Testis (tissue), 5 donors: ENCODE measurements at regions of chr10 and their contacts with region 1.

Region 1: DNA sequence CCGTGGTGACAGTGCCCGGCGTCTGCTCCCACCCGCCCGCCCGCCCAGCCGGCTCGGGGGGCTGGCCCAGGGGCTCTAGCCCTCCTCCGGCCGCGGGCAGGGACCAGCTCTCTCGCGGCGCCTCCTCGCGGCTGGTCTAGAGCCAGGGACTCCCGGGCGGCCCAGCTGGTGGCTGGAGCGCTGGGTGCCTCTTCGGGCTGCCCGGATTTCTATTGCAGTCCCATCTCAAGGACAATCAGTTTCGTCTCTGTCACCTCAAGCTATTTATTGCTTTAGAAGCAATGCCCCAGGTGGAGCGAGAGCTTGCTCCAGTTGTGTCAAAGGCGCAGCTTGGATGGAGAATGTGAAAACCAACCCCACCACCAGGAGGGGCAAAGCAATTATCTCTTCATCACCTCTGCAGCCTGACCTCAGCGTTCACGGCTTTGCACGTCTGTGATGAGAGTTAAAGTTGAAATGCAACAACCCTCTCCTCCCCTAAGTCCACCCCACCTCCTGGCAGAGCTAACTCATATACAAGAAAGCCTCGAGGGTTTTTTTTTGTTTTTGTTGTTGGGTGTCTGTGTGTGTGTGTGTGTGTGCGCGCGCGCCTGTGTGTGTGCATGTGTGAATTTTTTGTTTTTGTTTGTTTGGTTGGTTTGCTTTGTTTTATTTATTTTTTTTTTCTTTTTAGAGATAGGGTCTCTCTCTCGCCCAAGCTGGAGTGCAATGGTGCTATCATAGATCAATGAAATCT is at the start of gene ITGA8:
- DNase-seq: peak; percentile 45
- H3K4me3 ChIP-seq: peak within 1 kb of the TSS; percentile 5 to 32
- H3K27ac ChIP-seq: no peak within 1 kb of the TSS
- H3K4me1 ChIP-seq: peaks cover 8% of the 10 kb centered on the region
- H3K27me3 ChIP-seq: no peaks in the 10 kb centered on the region
- CTCF ChIP-seq: peak in 2 of 3 experiments; percentile 10 to 39
- POLR2A ChIP-seq: no peak
- total RNA-seq, gene ITGA8: 0.68 to 0.79 TPM

Region 2: GRCh38 chr10:15433850-15434537 is 286.1 kb before region 1 on chr10:
- intact Hi-C with region 1: loop called (anchors 5 kb)
- DNase-seq: peak; percentile 70
- H3K4me3 ChIP-seq: peak overlapping the region; percentile 24 to 36
- H3K27ac ChIP-seq: no peak overlapping the region
- H3K4me1 ChIP-seq: peaks cover 6% of the 10 kb centered on the region
- H3K27me3 ChIP-seq: no peaks in the 10 kb centered on the region
- CTCF ChIP-seq: peak; percentile 84 to 90 (median 84)
- POLR2A ChIP-seq: no peak